HEK293 (cell line): ENCODE measurements at regions of chr6 and their contacts with region 1.

Region 1: GRCh38 chr6:127737009-127737486 is 160.1 kb downstream of the C6orf58 start:
- H3K4me3 ChIP-seq: no peak overlapping the region
- H3K27ac ChIP-seq: no peak overlapping the region
- H3K4me1 ChIP-seq: peaks cover 3% of the 10 kb centered on the region; the same call in 1 of the 2 replicates
- CTCF ChIP-seq: peak; percentile 50; the same call in 1 of the 2 replicates

Region 2: DNA sequence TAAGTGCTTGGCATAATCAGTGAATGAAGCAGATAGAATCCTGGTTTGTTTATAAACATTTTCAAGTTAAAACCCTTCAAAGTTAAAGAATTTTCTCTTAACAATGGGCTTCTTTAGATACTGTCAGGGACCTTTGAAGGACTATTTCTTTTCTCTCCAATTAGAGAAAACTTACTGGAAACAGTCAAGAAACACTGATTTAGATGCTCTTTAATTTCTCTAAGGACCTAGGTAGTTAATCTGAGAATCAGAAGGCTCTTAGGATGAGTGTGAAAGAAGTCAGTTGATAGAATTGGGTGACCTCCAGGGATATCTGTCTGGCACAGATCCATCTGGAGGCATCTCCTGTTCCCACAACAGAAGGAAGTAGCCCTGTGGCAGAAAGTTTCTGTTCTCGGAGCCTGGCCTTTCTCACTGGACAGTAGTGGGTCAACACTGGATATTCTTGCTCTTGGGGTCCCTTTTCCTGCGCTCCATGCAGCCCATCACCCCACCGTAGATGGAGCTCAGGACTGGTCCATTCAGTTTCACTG is 300.4 kb before region 1 on chr6:
- CTCF ChIA-PET with region 1: no interaction called
- POLR2A ChIA-PET with region 1: no interaction called
- H3K4me3 ChIP-seq: no peak overlapping the region
- H3K27ac ChIP-seq: no peak overlapping the region
- H3K4me1 ChIP-seq: no peaks in the 10 kb centered on the region
- CTCF ChIP-seq: no peak

Region 3: DNA sequence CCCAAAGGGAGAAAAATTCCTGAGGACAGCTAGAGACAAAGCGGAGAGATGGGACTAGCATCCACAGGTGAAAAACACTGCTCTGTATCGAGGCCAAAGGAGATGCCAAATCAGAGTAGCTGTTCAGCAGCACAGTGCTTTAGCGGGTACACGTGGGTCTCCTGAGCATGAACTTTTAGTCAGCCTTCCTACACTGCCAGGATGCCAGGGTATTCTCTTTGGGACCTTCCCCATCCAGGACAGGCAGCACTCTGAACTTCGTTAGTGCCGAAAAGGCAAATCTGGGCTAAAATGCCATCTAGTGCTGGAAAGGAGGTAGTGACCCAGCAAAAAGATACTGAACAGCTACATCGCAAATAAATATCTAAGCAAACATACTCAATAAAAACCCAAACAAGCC is 95.1 kb before region 1 on chr6:
- CTCF ChIA-PET with region 1: no interaction called
- POLR2A ChIA-PET with region 1: no interaction called
- H3K4me3 ChIP-seq: no peak overlapping the region
- H3K27ac ChIP-seq: no peak overlapping the region
- H3K4me1 ChIP-seq: no peaks in the 10 kb centered on the region
- CTCF ChIP-seq: 0 out of 2 replicates have a peak, but pooled peaks have one; percentile 33

Region 4: DNA sequence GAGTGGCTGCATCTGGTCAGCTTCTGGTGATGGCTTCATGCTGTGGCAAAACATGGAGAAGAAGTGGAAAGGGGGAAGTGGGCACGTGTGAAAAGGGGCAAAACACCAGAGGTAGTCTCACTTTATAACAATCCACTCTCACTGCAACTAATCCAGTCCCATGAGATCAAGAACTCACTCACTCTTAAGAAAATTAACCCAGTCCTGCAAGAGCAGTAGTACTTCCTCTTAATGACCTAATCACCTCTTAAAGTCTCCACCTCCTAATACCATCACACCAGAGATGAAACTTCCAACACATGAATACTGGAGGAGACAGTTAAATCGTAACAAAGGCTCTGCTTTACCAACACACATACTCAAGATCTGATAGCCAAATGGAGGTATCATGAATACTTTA is 11.2 kb after region 1 on chr6:
- CTCF ChIA-PET with region 1: interaction called, 11 read pairs
- POLR2A ChIA-PET with region 1: no interaction called
- H3K4me3 ChIP-seq: no peak overlapping the region
- H3K27ac ChIP-seq: no peak overlapping the region
- H3K4me1 ChIP-seq: no peaks in the 10 kb centered on the region
- CTCF ChIP-seq: no peak

Region 5: DNA sequence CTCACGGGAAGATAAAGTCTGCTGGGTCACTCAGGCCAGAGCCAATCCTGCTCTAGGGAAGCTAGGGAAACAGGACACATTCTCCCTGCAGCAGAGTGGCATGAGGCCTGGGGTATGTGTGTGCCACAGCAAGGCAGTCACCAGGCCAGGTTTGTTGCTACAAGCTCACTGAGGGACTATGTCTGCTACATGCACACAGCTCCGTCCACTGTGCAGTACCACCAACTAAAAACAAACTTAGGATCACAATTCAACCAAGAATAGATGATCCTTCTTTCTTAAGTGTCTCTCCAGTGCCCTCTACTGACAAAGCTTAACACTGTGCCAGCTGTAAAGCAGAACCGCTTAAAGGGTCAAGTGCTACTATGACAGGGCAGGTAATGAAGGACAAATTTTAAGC is 590.8 kb after region 1 on chr6:
- CTCF ChIA-PET with region 1: interaction called, 13 read pairs
- POLR2A ChIA-PET with region 1: no interaction called
- H3K4me3 ChIP-seq: no peak overlapping the region
- H3K27ac ChIP-seq: no peak overlapping the region
- H3K4me1 ChIP-seq: no peaks in the 10 kb centered on the region
- CTCF ChIP-seq: no peak

Region 6: DNA sequence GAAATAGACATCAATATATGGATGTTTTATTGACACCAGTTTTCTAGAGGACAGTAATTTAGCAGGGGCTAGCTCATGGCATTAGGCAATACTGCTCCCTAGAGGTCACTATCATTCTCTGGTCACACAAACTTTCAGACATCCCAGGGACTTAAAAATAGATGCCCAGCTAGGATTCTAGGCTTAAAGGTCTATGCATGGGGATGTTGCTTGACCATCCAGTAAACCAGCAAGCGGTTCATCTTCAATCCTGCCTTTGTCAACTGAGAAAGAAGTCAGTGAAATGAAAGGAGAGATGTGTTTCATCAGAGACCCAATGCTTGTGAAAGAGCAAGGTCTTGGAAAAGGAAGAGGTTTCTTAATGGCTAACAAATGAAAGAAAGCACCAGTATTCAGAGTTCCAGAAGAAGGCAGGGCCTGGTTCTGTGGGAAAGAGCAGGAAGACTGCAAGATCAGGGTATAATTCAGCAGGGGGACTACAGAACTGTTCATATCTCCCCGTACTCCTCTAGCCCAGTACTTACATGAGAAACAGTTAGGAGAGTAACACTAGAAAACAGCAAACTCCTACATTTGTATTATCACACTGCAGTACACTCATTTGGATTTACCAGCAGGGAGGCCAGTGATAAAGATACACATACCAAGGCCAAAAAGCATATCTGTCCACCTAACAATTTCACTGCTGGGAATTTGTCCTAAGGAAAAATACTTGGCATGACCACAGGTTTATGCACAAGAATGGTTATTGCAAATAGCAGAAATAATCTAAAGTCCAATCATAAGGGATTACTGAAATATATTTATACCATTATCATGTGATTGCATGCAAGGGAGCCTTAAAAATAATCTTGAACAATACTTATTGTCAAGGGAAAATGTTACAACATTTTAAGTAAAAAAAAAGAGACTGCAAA is 994.5 kb after region 1 on chr6:
- CTCF ChIA-PET with region 1: interaction called, 22 read pairs
- POLR2A ChIA-PET with region 1: no interaction called
- H3K4me3 ChIP-seq: no peak overlapping the region
- H3K27ac ChIP-seq: no peak overlapping the region
- H3K4me1 ChIP-seq: no peaks in the 10 kb centered on the region
- CTCF ChIP-seq: peak; percentile 48; the same call in 1 of the 2 replicates